Activated CD8-positive, alpha-beta memory T cell treated with anti-CD3 and anti-CD28 coated beads, Interleukin-2, amount 10 ng/mL, durations not matched to agents 7 days and 5 days (primary cell): ENCODE measurements at regions of chr1 and their contacts with region 1.

Region 1: DNA sequence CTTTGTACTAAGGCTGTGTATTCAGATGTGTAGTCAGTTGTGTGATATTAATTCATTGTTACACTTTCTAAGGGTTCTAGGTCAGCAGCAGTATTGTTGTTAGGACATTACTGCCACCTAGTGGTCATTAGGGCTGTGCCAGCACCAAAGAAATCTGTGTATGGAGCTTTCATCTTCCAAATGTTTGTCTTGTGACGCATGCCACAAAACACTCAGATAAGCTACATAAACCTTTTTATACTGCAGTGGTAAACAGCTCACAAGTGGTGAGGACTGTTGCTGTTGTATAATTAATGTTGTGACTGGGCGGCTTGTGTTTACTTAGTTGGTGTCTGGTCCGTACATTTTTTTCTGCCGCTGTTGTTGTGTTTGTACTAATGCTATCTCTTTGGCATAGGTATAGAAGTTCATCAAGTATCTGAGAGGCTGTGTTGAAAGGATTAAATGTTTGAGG is 51.7 kb downstream of the S1PR1 start:
- DNase-seq: peak; percentile 76
- ATAC-seq: peak; percentile 60
- H3K4me3 Mint-ChIP-seq: no peak overlapping the region
- H3K27ac Mint-ChIP-seq: no peak overlapping the region
- H3K4me1 Mint-ChIP-seq: peaks cover 64% of the 10 kb centered on the region
- H3K27me3 Mint-ChIP-seq: no peaks in the 10 kb centered on the region

Region 2: DNA sequence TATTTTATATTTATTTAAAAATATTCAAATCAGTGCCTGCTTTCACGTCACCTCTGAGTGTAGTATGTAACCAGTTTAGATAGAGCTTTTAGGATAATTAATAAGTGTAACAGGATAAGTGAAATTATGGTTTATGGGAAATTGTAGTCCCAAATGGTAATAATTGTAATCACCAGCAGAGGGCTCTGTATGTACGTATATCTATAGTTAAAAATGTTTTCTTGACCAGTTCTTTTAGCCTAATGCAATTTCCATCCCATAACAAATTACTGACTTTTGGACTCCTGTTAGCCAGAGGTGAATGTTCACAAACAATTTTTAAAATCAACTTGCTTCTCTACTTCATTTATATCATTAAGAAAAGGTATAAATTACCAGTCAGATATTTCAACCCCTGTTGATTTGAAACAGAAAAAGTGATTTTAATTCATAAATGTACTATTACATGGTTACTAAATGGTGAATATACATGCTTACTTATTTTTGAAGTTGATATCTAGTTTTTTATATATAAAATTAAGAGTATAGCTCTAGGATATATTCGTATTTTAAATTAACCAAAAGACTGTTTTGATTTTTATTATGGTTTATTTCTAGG is 367.3 kb before region 1 on chr1:
- CTCF ChIA-PET with region 1: interaction called, 47 read pairs
- DNase-seq: no peak
- ATAC-seq: no peak
- H3K4me3 Mint-ChIP-seq: no peak overlapping the region
- H3K27ac Mint-ChIP-seq: no peak overlapping the region
- H3K4me1 Mint-ChIP-seq: peaks cover 19% of the 10 kb centered on the region
- H3K27me3 Mint-ChIP-seq: no peaks in the 10 kb centered on the region

Region 3: DNA sequence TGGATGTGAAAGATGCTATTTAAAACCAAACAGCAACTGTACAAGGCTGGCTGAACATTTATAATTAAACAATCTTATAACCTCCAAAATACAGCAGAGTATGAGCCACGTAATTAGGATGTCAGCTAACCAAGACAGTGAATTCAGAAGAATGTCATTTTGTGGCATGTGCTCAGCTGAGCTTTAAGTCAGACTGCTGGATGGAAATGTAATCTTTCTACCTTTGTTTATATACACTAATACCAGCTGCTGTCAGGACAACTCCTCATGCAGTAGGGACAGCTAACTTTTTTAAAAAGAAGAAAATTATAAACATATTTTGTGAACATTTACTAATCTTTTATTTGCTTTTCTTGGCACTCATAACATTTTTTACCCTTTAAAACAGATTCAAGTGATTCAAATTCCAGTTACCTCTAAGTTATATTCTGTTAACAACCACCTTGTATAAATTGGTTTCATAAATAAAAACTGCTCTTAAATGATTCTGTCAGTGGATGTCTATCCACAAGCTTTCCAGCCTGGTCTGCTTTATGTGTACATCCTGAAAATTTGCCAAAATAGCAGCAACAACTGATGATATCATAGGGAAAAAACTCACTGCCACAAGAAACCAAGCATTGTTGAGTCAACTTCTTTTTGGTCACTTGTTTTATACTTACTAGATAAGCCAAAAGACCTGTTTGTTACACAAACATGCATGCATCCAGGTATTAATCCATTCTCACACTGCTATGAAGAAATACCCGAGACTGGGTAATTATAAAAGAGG is 299.0 kb before region 1 on chr1:
- CTCF ChIA-PET with region 1: no interaction called
- DNase-seq: no peak
- ATAC-seq: no peak
- H3K4me3 Mint-ChIP-seq: no peak overlapping the region
- H3K27ac Mint-ChIP-seq: no peak overlapping the region
- H3K4me1 Mint-ChIP-seq: no peaks in the 10 kb centered on the region
- H3K27me3 Mint-ChIP-seq: no peaks in the 10 kb centered on the region

Region 4: GRCh38 chr1:101002551-101002950 is 286.0 kb before region 1 on chr1:
- CTCF ChIA-PET with region 1: interaction called, 13 read pairs
- DNase-seq: no peak
- ATAC-seq: no peak
- H3K4me3 Mint-ChIP-seq: no peak overlapping the region
- H3K27ac Mint-ChIP-seq: no peak overlapping the region
- H3K4me1 Mint-ChIP-seq: peaks cover 28% of the 10 kb centered on the region
- H3K27me3 Mint-ChIP-seq: no peaks in the 10 kb centered on the region

Region 5: DNA sequence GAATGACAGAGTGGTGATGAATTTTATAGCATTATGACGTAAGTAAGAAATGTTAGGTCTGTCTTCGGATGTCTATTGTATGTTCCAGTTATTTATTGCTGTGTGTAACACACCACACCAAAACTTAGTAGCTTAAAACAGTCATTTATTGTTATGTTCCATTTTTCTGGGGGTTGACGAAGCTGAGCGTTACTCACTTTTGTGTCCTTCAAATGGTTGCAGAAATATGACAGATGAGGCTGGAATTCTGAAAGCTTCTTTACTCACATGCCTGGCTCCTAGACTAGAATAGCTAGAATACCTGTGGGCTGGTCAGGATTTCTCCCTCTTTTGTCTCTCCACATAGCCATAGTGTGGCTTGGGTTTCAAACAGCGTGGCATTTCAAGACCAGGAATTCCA is 113.8 kb before region 1 on chr1:
- CTCF ChIA-PET with region 1: no interaction called
- DNase-seq: no peak
- ATAC-seq: no peak
- H3K4me3 Mint-ChIP-seq: no peak overlapping the region
- H3K27ac Mint-ChIP-seq: no peak overlapping the region
- H3K4me1 Mint-ChIP-seq: peaks cover 39% of the 10 kb centered on the region
- H3K27me3 Mint-ChIP-seq: no peaks in the 10 kb centered on the region

Region 6: DNA sequence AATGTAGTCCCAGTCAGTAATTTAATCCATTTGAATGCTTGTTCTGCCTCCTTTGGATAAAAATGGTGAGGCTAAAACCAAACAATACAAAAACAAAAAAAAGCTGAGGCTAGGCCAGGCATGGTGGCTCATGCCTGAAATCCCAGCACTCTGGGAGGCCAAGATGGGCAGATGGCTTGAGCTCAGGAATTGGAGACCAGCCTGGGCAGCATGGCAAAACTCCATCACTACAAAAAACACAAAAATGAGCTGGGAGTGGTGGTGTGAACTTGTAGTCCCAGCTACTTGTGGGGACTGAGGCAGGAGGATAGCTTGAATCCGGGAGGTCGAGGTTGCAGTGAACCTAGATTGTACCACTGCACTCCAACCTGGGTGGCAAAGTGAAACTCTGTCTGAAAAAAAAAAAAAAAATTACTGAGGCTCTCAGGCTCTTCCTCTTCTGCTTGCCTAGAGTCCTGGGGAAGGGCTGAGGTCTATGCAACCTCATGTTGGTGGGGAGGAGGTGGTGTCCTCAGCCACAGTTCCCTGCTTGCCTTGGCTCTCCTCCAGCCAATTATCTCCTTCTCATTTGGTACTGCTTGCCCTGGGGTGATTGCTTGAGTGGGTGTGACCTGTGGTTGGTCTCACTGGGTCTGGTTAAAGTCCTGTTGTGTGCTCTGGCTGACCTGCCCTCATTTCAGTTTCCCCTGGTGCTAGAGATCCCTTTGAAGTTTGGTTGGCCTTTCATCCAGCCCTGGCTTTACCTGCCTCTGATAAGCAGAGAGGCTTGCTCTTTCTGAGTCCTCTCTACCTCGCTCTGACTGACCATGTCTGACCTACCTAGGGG is 30.8 kb before region 1 on chr1:
- CTCF ChIA-PET with region 1: interaction called, 32 read pairs
- DNase-seq: peak; percentile 82
- ATAC-seq: peak; percentile 83
- H3K4me3 Mint-ChIP-seq: peak overlapping the region; percentile 4
- H3K27ac Mint-ChIP-seq: peak overlapping the region; percentile 65
- H3K4me1 Mint-ChIP-seq: peaks cover 56% of the 10 kb centered on the region
- H3K27me3 Mint-ChIP-seq: no peaks in the 10 kb centered on the region

Region 7: DNA sequence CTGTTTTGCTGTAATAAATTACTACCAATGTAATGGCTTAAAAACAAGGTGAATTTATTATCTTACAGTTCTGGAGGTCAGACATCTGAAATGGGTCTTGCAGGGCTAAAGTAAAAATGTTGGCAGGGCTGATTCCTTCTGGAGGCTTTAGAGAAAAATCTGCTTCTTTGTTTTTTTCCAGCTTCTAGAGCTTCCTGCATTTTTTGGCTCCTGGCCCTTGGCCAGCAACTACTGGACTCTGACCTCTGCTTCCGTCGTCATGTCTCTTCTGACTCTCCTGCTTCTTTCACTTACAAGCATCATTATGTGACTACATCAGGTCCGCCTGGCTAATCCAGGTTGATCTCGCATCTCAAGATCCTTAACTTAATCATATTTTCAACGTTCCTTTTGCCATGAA is 299.2 kb after region 1 on chr1:
- CTCF ChIA-PET with region 1: no interaction called
- DNase-seq: no peak
- ATAC-seq: no peak
- H3K4me3 Mint-ChIP-seq: no peak overlapping the region
- H3K27ac Mint-ChIP-seq: no peak overlapping the region
- H3K4me1 Mint-ChIP-seq: no peaks in the 10 kb centered on the region
- H3K27me3 Mint-ChIP-seq: peaks cover 16% of the 10 kb centered on the region